ENCODE measurements at regions of chr3 and their contacts with region 1.

Region 1: DNA sequence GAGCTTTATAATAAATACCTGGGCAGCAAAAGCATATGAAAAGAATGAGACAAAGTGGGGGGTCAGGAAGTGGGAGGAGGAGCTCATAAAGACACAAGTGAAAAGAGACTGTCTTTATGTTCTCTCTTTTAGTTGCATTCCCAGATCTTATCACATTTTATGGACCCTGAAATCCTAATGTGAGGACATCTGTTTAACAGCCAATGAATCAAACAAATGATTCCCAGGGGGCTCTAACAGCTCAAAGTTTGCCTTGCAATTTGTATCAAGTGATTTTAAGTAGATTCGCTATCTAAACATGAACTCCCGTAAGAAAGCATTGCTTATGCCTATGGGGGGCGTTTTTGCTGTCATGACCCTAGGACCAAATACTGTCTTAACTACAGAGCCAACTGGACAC is 332.3 kb upstream of the CNTN4 start:
- DNase-seq: no peak
- H3K4me3 ChIP-seq: no peak overlapping the region
- H3K27ac ChIP-seq: no peak overlapping the region
- H3K4me1 ChIP-seq: no peaks in the 10 kb centered on the region
- H3K27me3 ChIP-seq: no peaks in the 10 kb centered on the region
- CTCF ChIP-seq: no peak

Region 2: DNA sequence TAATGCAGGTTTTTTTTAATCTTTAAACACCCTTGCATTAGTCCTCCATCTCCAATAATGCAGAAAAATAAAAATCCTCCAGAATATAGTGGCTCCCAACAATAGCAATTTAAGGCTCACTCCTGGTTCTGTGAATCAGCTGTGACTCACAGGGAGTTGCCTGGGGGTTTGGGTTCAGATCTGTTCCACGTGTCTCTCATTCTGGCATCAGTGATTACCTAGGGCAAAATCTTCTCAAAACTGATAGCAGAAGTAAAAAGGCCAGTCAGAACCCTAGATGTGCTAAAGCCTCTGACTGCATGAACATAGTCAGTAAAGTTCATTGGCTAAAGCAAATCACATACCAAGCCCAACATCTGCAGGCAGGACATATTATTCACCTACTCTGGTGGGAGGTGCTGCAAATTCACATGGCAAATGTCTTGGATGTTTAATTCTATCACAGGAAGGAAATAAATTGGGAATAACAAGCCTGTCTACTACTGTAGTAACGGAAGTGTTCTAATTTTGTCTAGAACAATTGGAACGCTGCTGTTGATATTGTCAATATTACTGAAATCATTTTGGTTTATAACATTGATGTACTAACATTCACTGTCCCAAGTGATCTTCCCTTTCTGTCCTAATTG is 31.8 kb before region 1 on chr3:
- CTCF ChIA-PET with region 1: no interaction called
- POLR2A ChIA-PET with region 1: no interaction called
- intact Hi-C with region 1: loop called (anchors 1 kb)
- DNase-seq: no peak
- H3K4me3 ChIP-seq: no peak overlapping the region
- H3K27ac ChIP-seq: no peak overlapping the region
- H3K4me1 ChIP-seq: no peaks in the 10 kb centered on the region
- H3K27me3 ChIP-seq: no peaks in the 10 kb centered on the region
- CTCF ChIP-seq: no peak